ENCODE measurements at regions of chr12 and their contacts with region 1.

Region 1: DNA sequence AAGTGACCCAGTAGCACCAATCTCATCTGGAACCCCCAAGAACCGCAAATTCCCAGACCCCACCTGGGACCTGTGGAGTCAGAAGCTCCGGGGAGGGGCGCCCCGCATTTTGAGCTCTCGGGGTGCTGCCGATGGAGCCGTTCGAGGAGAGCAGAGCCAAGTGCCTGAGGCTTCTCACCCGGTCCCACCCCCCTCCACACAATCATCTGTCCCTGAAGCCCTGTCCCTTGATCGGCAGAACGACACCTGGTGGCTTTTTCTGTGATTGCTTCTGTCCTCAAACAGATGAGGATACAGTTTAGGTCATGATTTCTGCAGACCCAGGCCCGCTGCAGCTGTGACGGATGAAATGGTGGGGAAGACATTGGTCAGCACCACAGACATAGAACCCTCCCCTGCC is 74.7 kb downstream of the NOC4L start:
- DNase-seq: peak; percentile 77
- H3K4me3 ChIP-seq: no peak overlapping the region
- H3K27ac ChIP-seq: no peak overlapping the region
- H3K4me1 ChIP-seq: no peaks in the 10 kb centered on the region
- H3K27me3 ChIP-seq: peaks cover 46% of the 10 kb centered on the region
- CTCF ChIP-seq: peak; percentile 48
- EP300 ChIP-seq: no peak
- RAD21 ChIP-seq: peak; percentile 48

Region 2: GRCh38 chr12:132205271-132206045 is 13.5 kb before region 1 on chr12:
- CTCF ChIA-PET with region 1: interaction called, 15 read pairs
- POLR2A ChIA-PET with region 1: no interaction called
- DNase-seq: peak; percentile 50
- H3K4me3 ChIP-seq: no peak overlapping the region; a peak in 1 of 4 replicates
- H3K27ac ChIP-seq: no peak overlapping the region
- H3K4me1 ChIP-seq: no peaks in the 10 kb centered on the region
- H3K27me3 ChIP-seq: peaks cover 92% of the 10 kb centered on the region
- CTCF ChIP-seq: no peak
- EP300 ChIP-seq: no peak
- RAD21 ChIP-seq: no peak